ENCODE measurements at regions of chr6 and their contacts with region 1.

Region 1: DNA sequence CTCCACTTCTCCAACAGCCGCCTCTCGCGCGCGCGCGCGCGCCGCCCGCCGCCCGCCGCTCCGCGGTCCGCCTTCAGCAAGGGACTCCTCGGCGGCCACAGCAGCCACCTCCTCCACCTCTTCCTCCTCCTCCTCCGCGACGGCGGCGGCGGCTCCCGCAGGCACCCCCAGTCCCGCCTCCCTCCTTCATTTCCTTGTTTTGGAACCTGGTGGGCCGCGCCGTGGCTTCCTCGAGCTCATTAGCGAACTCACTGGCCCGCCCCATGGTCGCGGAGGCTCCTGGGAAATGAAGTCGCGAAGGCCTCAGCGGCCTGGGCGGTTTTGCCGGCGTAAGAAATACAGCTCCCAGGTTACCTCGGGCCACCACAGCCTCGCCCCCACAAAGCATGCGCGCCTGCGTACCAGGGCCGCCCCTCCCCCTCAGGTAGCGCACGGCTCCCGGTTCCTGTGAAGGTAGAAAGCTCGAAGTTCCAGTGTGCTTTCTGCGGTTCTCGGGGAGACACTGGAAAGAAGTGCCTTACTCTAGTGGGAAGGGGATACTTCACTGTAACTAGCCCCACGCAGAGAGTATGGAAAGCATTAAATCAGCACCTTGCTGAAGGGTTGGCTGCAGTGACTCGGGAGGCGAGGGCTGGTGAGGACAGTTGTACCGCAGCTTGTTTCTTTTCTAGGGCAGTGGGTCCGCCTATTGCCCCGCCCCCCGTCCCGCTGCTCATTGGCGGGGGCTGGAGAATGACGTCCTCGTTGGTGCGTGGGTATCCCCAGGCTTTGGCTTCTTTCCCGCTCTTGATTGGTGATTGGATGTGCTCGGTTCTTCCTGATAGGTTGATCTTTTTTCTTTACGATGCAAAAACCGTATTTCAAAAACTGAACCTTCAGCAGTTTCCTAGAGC is at the start of gene CDK19:
- DNase-seq: peak; percentile 96 to 99
- H3K4me3 ChIP-seq: peak within 1 kb of the TSS; percentile 97
- H3K27ac ChIP-seq: peak within 1 kb of the TSS; percentile 93 to 98
- H3K4me1 ChIP-seq: peaks cover 3 to 6% of the 10 kb centered on the region in 2 donors
- H3K27me3 ChIP-seq: no peaks in the 10 kb centered on the region
- CTCF ChIP-seq: no peak
- total RNA-seq, gene CDK19: 5.2 TPM

Region 2: GRCh38 chr6:110179401-110180227 is 635.8 kb before region 1 on chr6 and contains the start of gene WASF1:
- intact Hi-C with region 1: loop called (anchors 10 kb)
- DNase-seq: peak; percentile 84 to 98
- H3K4me3 ChIP-seq: peak within 1 kb of the TSS; percentile 85 to 86
- H3K27ac ChIP-seq: peak within 1 kb of the TSS; percentile 81 to 83
- H3K4me1 ChIP-seq: peaks cover 3 to 22% of the 10 kb centered on the region in 2 donors
- H3K27me3 ChIP-seq: no peaks in the 10 kb centered on the region
- CTCF ChIP-seq: peak in 1 of 3 experiments; percentile 13
- total RNA-seq, gene WASF1: 0.53 TPM

Region 3: DNA sequence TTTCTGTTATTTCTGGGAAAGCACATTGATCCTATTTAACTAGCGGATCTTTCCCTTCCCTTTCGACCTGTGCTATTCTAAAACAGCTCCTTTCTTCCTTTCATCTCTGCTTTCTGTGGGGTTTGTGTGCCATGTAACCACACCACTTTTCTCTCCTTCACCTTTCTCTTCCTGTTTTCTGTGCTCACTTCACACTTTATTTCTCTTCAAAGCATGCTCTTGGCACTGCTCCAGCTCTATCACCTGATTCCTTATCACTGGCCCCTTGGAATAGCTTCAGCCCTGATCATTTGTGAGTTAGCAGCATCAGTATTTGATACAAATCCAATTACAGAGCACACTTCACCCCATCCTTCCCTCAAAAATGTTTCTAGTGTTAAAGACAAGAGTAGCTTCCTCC is 449.2 kb before region 1 on chr6:
- intact Hi-C with region 1: loop called (anchors 5 kb)
- DNase-seq: no peak
- H3K4me3 ChIP-seq: no peak overlapping the region
- H3K27ac ChIP-seq: no peak overlapping the region
- H3K4me1 ChIP-seq: peaks cover 6 to 13% of the 10 kb centered on the region in 2 donors
- H3K27me3 ChIP-seq: no peaks in the 10 kb centered on the region
- CTCF ChIP-seq: no peak

Region 4: GRCh38 chr6:110859335-110859792 is 43.9 kb after region 1 on chr6:
- intact Hi-C with region 1: no loop called
- DNase-seq: no peak
- H3K4me3 ChIP-seq: no peak overlapping the region
- H3K27ac ChIP-seq: no peak overlapping the region
- H3K4me1 ChIP-seq: no peaks in the 10 kb centered on the region
- H3K27me3 ChIP-seq: no peaks in the 10 kb centered on the region
- CTCF ChIP-seq: no peak

Region 5: DNA sequence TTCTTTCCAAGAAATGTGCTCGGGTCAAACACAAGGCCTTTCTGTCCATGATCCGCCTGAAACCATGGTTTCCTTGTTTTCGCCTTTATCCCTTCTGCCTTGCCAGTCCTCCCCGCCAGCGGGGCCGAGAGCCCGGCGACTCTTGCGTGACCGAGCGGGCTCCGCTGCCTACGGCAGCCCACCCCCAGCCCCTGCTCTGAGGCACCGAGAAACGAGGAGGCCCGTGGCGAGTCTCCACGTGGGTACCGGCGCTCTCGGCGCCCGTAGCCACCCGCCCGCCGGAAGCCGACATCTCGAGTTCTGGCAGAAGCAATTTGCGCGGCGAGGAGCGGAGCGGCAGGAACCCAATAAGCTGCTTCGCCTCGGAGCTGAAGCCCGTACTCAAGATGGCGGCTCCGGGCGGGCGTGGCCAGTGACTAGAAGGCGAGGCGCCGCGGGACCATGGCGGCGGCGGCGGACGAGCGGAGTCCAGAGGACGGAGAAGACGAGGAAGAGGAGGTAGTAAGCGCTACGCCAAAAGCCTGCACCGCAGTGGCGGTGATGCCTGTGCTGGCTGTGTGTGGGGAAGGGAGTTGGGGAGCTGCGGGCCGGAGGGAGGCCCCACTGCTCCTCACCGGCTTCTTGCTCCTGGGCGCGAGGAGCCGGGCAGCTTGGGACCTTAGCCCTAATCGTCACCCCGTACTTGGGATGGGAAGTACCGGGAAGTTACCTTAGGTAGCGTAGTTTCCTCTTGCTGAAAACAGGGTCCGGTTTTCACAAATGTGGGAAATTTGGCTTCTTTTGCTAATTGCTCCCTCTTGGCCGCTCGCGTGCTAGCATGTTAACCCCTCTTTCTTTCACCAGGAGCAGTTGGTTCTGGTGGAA is 143.1 kb after region 1 on chr6 and contains the start of gene GTF3C6:
- intact Hi-C with region 1: loop called (anchors 2 kb)
- DNase-seq: peak; percentile 82 to 97
- H3K4me3 ChIP-seq: peak within 1 kb of the TSS; percentile 81 to 90
- H3K27ac ChIP-seq: peak within 1 kb of the TSS; percentile 86 to 96
- H3K4me1 ChIP-seq: peaks cover 0 to 2% of the 10 kb centered on the region in 2 donors
- H3K27me3 ChIP-seq: no peaks in the 10 kb centered on the region
- CTCF ChIP-seq: no peak
- total RNA-seq, gene GTF3C6: 31.9 TPM

Region 6: DNA sequence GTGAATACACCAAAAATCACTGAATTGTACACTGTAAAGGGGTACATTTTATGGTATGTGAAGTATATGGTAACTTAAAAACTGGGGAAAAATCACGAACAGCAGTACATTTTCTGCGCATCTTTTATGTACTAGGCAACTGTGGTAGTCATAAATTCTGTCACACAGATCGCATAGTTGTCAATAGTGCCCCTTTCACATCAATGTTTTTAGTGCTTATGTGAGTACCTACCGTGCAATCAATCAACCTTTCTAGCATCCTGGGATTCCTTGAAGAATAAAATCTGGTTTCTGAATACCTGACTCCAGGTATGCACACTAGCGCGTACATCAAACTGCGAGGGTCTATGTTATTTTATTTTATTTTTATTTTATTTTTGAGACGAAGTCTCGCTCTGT is 165.7 kb after region 1 on chr6:
- intact Hi-C with region 1: loop called (anchors 2 kb)
- DNase-seq: no peak
- H3K4me3 ChIP-seq: peak overlapping the region; percentile 70 to 73
- H3K27ac ChIP-seq: peak overlapping the region; percentile 78 to 86
- H3K4me1 ChIP-seq: peaks cover 0 to 5% of the 10 kb centered on the region in 2 donors
- H3K27me3 ChIP-seq: no peaks in the 10 kb centered on the region
- CTCF ChIP-seq: no peak

Region 7: DNA sequence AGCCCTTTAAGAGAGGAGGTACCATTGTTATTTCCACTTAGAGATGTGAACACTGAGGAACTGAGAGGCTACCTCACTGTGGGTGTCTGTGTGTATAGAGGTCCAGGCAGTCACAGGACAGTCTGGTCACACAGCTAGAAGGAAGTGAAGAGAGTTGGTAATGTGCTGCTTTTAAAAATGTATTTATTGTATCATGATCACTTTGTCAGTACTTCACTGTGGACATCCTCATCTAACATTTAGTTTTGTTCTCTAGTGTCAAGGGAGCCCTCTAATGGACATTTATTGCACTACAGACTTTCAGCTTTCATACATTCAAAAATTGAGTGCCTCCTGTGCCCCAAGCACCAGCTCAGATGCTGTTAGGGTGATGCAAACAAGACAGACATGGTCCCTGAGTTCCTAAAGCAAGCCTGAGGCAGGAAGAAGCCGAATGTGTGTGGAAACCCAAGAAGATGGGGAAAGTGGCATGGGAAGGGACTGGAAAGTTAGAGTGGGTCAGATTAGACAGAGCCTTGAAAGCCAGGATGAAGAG is 394.8 kb after region 1 on chr6:
- intact Hi-C with region 1: loop called (anchors 10 kb)
- DNase-seq: no peak
- H3K4me3 ChIP-seq: no peak overlapping the region
- H3K27ac ChIP-seq: no peak overlapping the region
- H3K4me1 ChIP-seq: peaks cover 0 to 26% of the 10 kb centered on the region in 2 donors
- H3K27me3 ChIP-seq: no peaks in the 10 kb centered on the region
- CTCF ChIP-seq: peak; percentile 53 to 84 (median 67)

Region 8: DNA sequence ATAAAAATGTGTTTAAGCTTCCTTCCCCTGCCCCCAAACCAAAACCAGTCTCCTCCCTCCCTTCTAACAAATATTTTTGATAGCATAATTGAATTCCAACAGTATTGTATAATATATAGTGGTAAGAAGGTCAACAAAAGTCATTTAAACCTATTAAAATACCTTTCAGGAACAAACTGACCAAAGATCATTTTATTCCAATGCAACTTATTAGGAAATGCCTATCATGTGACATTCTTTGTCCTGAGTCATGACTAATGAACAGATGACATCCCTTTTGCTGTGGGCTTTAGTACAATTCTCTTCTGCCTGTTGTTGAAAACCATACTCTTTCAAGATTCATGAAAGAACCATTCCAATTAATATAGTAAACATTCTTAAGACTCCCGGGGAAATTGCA is 841.7 kb after region 1 on chr6:
- intact Hi-C with region 1: no loop called
- DNase-seq: no peak
- H3K4me3 ChIP-seq: no peak overlapping the region
- H3K27ac ChIP-seq: no peak overlapping the region
- H3K4me1 ChIP-seq: peaks cover 0 to 16% of the 10 kb centered on the region in 2 donors
- H3K27me3 ChIP-seq: no peaks in the 10 kb centered on the region
- CTCF ChIP-seq: no peak